Panc1 (cell line): ENCODE measurements at regions of chr18 and their contacts with region 1.

Region 1: DNA sequence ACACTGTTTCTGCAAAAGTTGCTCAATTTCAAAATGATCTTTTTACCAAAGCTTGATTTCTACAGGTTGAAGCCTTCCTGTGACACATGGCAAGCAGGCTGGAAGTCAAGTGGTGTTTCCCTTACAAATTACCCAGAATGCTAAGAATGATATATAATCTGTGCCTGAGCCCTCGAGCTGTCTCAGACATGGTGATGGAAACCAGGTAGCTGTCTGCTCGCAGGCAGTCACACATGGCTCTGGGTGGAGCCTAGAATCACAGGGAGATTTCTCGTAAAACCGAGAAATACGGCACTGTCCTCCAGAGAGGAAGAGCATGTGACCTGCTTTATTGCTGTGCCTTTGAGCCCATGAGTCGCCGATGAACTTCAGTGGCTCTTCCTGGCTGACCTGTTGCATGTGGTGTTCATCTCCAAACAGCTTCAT is 392.9 kb downstream of the ZNF521 start:
- DNase-seq: no peak
- ATAC-seq: no peak
- H3K4me3 ChIP-seq: no peak overlapping the region
- H3K27ac ChIP-seq: no peak overlapping the region
- H3K4me1 ChIP-seq: no peaks in the 10 kb centered on the region
- H3K27me3 ChIP-seq: no peaks in the 10 kb centered on the region
- CTCF ChIP-seq: no peak

Region 2: GRCh38 chr18:24627644-24628315 is 331.3 kb before region 1 on chr18:
- CTCF ChIA-PET with region 1: no interaction called
- POLR2A ChIA-PET with region 1: no interaction called
- in situ Hi-C with region 1: no loop called
- intact Hi-C with region 1: loop called (anchors 5 kb)
- DNase-seq: no peak
- ATAC-seq: no peak
- H3K4me3 ChIP-seq: no peak overlapping the region
- H3K27ac ChIP-seq: no peak overlapping the region
- H3K4me1 ChIP-seq: no peaks in the 10 kb centered on the region
- H3K27me3 ChIP-seq: no peaks in the 10 kb centered on the region
- CTCF ChIP-seq: no peak